ENCODE measurements at regions of chr9 and their contacts with region 1.

Region 1: DNA sequence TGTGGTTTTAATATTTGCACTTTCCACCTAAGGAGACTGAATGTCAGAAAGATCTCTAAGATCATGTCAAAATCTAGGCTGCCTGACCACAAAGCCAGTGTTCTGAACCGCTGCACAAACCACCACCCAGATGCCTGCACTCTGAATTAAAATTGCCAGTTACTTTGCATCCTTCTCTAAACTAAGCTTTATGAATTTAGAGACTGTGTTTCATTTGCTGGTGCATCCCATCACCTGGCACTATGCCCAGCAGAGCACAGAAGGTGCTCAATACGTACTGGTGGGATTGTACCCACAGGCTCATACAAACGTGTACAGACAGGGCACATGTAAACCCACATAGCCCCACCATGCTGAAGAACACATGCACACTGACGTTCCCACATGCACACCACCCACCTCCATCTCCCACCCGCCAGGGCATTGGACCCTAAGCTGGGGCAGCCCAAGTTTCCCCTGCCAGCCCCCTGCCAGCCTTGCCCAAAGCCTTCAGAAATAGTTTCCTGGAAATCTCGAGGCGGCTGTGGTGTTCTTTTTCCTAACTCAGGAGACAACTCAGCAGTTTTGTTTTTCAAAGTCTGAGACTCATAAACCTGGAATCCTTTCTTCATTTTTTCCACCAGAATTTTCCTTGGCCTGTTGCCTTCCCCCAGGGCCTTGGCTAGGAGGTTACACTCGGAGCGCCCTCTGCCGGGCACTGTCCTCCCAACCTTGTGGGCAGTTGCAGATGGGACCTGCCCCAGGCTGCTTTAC is 9.6 kb upstream of the TRAF1 start:
- DNase-seq: peak; percentile 68
- ATAC-seq: peak; percentile 69
- H3K4me3 ChIP-seq: peak overlapping the region; percentile 19; the same call in 1 of the 2 replicates
- H3K27ac ChIP-seq: peak overlapping the region; percentile 96
- H3K4me1 ChIP-seq: peaks cover 47% of the 10 kb centered on the region
- H3K27me3 ChIP-seq: no peaks in the 10 kb centered on the region
- CTCF ChIP-seq: peak; percentile 90 to 96 (median 90)
- EP300 ChIP-seq: no peak
- POLR2A ChIP-seq: no peak
- RAD21 ChIP-seq: peak; percentile 97

Region 2: DNA sequence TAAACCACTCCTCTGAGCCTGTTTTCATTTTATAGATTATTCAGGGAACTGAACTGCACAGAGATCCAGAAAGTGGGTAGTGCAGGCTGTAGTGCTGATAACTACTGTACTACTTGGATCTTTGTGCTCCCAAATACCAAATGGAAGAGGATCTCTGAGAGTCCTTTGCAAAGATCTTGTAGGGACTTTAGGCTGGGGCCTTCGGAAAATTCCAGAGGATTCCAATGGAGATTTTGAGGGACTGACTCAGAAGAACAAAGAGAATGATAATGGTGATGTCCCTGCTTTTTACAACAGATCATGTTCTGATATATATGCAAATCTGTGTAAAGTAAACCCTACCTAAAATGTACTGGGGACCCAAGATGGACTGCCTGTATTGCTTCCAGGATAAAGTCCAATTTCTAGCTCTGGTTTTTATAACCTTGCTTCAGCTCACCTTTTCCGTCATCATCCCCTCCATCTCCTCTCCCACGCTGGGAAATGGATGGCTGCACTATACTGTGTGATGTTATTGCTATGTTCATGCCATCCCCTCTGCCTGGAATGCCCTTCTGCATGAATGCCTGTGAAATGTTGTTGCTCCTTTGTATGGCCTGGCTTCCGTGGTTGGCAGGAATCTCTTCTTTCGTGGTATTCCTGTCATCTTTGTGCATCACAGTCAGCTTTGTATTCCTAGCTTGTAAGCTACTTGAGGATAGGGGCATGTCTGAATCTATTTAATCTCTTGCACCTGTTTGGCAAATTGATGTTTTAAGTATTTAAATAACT is 83.8 kb before region 1 on chr9:
- CTCF ChIA-PET with region 1: no interaction called
- POLR2A ChIA-PET with region 1: no interaction called
- RAD21 ChIA-PET with region 1: no interaction called
- SMC1A ChIA-PET with region 1: no interaction called
- in situ Hi-C with region 1: no loop called
- intact Hi-C with region 1: no loop called
- DNase-seq: no peak
- ATAC-seq: no peak
- H3K4me3 ChIP-seq: no peak overlapping the region
- H3K27ac ChIP-seq: no peak overlapping the region
- H3K4me1 ChIP-seq: no peaks in the 10 kb centered on the region
- H3K27me3 ChIP-seq: no peaks in the 10 kb centered on the region
- CTCF ChIP-seq: no peak
- EP300 ChIP-seq: no peak
- POLR2A ChIP-seq: 0 out of 2 replicates have a peak, but pooled peaks have one; percentile 24
- RAD21 ChIP-seq: no peak

Region 3: DNA sequence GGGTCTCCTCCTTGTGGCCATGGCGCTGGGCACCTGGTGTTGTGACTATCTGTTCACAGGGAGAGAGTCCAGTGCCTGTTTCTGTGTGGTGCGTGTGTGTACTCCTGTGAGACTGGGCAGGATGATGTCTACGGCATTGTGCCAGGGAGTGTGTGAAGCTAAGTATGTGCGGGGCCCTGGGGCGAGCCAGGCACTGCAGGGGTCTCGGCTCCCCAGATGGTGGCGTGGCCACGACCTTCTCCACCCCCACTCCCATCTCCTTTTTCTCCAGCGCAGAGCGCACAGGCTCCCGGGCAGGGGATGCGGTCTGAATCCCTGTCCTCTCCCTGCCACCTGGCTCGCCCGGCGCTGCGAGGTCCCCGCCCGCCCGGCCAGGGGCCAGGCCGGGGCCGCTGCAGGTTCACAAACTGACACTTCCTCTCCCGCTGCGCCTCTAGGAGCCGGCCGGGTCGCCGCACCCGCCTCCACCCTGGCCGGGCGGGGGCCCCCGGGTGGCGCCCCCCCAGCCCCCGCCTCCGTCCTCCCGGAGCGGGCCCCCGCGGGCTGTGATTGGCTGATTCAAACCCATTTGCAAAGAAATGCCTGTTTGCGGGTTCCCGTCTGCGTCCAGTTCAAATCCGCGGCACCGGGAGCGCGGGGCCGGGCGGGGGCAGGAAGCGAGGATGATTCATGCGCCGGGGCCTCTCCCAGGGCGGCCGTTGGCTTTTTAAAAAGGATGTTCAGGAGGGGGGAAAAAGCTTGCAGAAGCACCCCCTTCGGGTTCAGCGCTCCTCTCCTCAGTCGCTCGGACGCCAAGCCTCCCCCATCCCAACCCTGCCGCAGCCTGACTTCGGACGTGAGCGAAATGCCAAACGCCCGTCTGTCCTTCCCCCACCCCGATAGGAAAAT is 60.0 kb before region 1 on chr9:
- CTCF ChIA-PET with region 1: interaction called, 20 read pairs
- POLR2A ChIA-PET with region 1: interaction called, 4 read pairs
- RAD21 ChIA-PET with region 1: interaction called, 11 read pairs
- SMC1A ChIA-PET with region 1: interaction called, 57 read pairs
- in situ Hi-C with region 1: loop called (anchors 5 kb)
- intact Hi-C with region 1: loop called (anchors 2 kb)
- DNase-seq: no peak
- ATAC-seq: peak; percentile 80
- H3K4me3 ChIP-seq: peak overlapping the region; percentile 92
- H3K27ac ChIP-seq: peak overlapping the region; percentile 93
- H3K4me1 ChIP-seq: peaks cover 27% of the 10 kb centered on the region
- H3K27me3 ChIP-seq: no peaks in the 10 kb centered on the region
- CTCF ChIP-seq: no peak; a peak in 1 of 6 replicates
- EP300 ChIP-seq: peak in 1 of 2 experiments; percentile 54; a peak in 1 of 4 replicates
- POLR2A ChIP-seq: peak; percentile 79
- RAD21 ChIP-seq: no peak

Region 4: GRCh38 chr9:120886490-120886967 is 49.7 kb before region 1 on chr9:
- CTCF ChIA-PET with region 1: interaction called, 14 read pairs
- POLR2A ChIA-PET with region 1: interaction called, 383 read pairs
- RAD21 ChIA-PET with region 1: interaction called, 10 read pairs
- SMC1A ChIA-PET with region 1: interaction called, 522 read pairs
- in situ Hi-C with region 1: no loop called
- intact Hi-C with region 1: no loop called
- DNase-seq: no peak
- ATAC-seq: peak; percentile 49
- H3K4me3 ChIP-seq: no peak overlapping the region
- H3K27ac ChIP-seq: no peak overlapping the region
- H3K4me1 ChIP-seq: peaks cover 26% of the 10 kb centered on the region
- H3K27me3 ChIP-seq: no peaks in the 10 kb centered on the region
- CTCF ChIP-seq: no peak; a peak in 1 of 6 replicates
- EP300 ChIP-seq: no peak
- POLR2A ChIP-seq: no peak
- RAD21 ChIP-seq: no peak

Region 5: GRCh38 chr9:120892748-120893610 is 43.2 kb before region 1 on chr9:
- CTCF ChIA-PET with region 1: interaction called, 13 read pairs
- POLR2A ChIA-PET with region 1: interaction called, 383 read pairs
- RAD21 ChIA-PET with region 1: interaction called, 10 read pairs
- SMC1A ChIA-PET with region 1: interaction called, 522 read pairs
- in situ Hi-C with region 1: no loop called
- intact Hi-C with region 1: no loop called
- DNase-seq: no peak
- ATAC-seq: peak; percentile 80
- H3K4me3 ChIP-seq: no peak overlapping the region
- H3K27ac ChIP-seq: peak overlapping the region; percentile 94
- H3K4me1 ChIP-seq: peaks cover 62% of the 10 kb centered on the region
- H3K27me3 ChIP-seq: no peaks in the 10 kb centered on the region
- CTCF ChIP-seq: no peak
- EP300 ChIP-seq: peak; percentile 91 to 95
- POLR2A ChIP-seq: peak; percentile 62
- RAD21 ChIP-seq: no peak

Region 6: DNA sequence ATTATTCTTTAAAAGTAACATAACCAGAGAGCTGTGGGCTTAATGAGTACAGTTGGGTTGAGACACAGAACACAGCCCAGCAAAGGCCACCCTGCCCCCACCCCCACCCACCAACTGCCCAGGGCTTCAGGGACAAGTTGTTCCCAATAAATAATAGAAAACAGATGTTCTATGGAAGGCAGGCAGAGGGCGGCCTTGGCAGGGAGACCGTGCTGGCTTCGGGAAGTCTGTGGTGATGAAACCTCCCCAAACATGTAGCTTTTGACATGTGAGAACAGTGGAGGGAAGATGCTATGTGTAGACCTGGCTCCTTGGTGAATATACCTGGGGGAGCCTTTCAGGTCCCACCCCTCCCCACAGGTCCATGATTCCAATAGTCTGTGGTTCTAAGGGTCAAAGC is 19.6 kb before region 1 on chr9:
- CTCF ChIA-PET with region 1: interaction called, 110 read pairs
- POLR2A ChIA-PET with region 1: interaction called, 224 read pairs
- RAD21 ChIA-PET with region 1: interaction called, 196 read pairs
- SMC1A ChIA-PET with region 1: interaction called, 108 read pairs
- in situ Hi-C with region 1: no loop called
- intact Hi-C with region 1: loop called (anchors 2 kb)
- DNase-seq: no peak
- ATAC-seq: no peak
- H3K4me3 ChIP-seq: no peak overlapping the region
- H3K27ac ChIP-seq: peak overlapping the region; percentile 20; the same call in 1 of the 2 replicates
- H3K4me1 ChIP-seq: peaks cover 21% of the 10 kb centered on the region
- H3K27me3 ChIP-seq: no peaks in the 10 kb centered on the region
- CTCF ChIP-seq: no peak; a peak in 1 of 6 replicates
- EP300 ChIP-seq: no peak
- POLR2A ChIP-seq: no peak
- RAD21 ChIP-seq: no peak

Region 7: DNA sequence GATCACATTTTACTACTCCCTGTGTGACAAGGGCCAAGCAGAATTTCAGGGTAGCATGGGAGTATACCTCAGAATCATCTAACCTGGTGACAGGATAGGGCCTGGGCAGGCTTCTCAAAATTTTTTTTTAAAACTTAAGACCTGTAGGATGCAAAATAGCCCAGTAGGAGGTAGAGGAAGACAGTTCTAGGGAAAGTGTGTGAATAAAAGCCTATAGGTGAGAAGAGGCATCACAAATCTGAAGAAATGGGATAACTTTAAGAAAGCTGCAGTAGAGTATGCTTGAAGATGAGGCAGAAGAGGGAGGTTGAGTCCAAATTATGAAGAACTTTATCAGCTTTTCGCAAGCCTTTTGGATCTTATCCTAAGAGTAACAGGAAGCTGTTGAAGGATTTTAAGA is 170.9 kb after region 1 on chr9:
- CTCF ChIA-PET with region 1: no interaction called
- POLR2A ChIA-PET with region 1: no interaction called
- RAD21 ChIA-PET with region 1: no interaction called
- SMC1A ChIA-PET with region 1: no interaction called
- in situ Hi-C with region 1: no loop called
- intact Hi-C with region 1: no loop called
- DNase-seq: no peak
- ATAC-seq: peak; percentile 79
- H3K4me3 ChIP-seq: no peak overlapping the region
- H3K27ac ChIP-seq: no peak overlapping the region
- H3K4me1 ChIP-seq: no peaks in the 10 kb centered on the region
- H3K27me3 ChIP-seq: no peaks in the 10 kb centered on the region
- CTCF ChIP-seq: peak in 2 of 3 experiments; percentile 16 to 30; a peak in 2 of 6 replicates
- EP300 ChIP-seq: no peak
- POLR2A ChIP-seq: no peak
- RAD21 ChIP-seq: peak; percentile 38; the same call in 1 of the 2 replicates

Measured in GM12878 (cell line).